Calu3 (cell line): ENCODE measurements at regions of chr3 and their contacts with region 1.

Region 1: DNA sequence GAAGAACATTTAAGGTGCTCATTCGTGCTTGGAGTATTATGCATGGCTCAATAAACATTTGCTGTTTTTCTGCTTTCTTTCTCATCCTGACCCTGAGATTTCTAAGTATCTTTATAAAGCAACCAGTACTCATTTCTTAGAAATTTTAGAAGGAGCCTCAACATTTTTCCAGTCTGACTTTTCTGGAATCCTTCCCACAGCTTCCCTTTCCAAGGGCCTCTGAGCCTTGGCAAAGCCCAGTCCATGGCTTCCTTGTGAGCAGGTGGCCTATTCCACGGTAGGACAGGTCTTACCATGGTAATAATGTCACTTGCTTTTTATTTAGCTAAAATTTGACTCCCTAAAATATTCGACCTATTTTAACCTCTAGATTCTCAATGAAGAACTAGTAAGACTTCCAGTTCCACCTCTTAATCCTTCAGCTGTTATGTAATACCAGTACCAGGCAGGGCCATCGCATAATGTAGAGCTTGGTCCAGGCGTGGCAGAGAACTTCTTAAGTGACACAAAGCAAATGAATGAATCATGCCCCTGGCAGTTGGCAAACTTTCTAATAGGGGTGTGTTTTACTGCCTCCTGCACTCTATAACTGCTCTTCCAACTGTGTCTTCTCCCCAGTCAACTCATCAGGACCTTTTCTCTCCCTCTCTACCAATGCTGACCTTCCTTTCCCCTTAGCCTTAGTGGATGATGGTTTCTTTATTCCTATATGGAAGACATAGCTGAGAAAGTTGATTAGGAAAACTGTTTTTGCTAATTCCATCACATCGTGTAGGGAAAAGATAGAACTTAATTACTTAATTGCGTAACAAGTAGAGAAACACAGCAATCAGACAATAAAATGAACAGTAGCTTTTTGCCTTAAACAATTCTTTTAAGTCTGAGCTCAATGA is 894 bp upstream of the TM4SF4 start:
- DNase-seq: peak; percentile 93
- H3K4me3 Mint-ChIP-seq: peak overlapping the region; percentile 77
- H3K27ac Mint-ChIP-seq: peak overlapping the region; percentile 99
- H3K4me1 Mint-ChIP-seq: peaks cover 82% of the 10 kb centered on the region
- H3K27me3 Mint-ChIP-seq: no peaks in the 10 kb centered on the region
- CTCF ChIP-seq: no peak

Region 2: DNA sequence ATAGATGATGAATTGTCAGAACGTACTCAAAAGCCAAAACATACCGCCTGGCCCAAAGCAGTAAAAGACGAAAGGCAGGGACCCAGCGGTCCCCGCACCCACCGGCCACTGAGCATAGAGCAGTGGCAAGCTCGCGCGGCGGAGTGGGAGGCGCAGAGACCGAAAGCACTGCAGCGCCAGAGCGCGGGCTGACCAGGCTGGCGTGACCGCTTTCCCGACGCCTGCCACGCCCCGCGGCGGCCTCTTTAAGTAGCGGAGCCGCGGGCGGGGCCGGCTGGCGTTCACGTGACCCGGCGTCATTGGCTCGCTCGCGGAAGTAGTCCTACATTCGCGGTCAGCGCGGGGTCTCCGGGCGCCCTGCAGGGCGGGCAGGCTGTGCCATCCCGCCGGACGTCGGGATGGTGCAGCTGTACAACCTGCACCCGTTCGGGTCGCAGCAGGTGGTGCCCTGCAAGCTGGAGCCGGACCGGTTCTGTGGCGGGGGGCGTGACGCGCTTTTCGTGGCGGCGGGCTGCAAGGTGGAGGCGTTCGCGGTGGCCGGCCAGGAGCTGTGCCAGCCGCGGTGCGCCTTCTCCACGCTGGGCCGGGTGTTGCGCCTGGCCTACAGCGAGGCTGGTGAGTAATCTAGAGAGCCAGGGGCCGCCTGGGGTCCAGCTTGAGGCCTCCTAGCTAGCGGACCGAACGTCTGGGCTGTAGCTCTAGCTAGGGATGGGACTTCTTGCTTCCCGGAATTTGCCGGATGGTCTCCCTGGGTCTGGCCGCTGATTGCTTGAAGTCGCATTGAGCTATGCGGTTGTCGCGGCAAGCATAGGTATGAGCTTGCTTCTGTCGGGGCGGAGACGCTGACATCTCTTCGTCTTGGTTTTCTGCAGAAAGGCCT is 344.0 kb before region 1 on chr3 and contains the start of gene HPS3:
- CTCF ChIA-PET with region 1: no interaction called
- intact Hi-C with region 1: loop called (anchors 2 kb)
- DNase-seq: peak; percentile 98
- H3K4me3 Mint-ChIP-seq: peak within 1 kb of the TSS; percentile 94
- H3K27ac Mint-ChIP-seq: peak within 1 kb of the TSS; percentile 91
- H3K4me1 Mint-ChIP-seq: peaks cover 29% of the 10 kb centered on the region
- H3K27me3 Mint-ChIP-seq: no peaks in the 10 kb centered on the region
- CTCF ChIP-seq: peak; percentile 16
- total RNA-seq, gene HPS3: 46.4 and 49.5 TPM in 2 replicates

Region 3: DNA sequence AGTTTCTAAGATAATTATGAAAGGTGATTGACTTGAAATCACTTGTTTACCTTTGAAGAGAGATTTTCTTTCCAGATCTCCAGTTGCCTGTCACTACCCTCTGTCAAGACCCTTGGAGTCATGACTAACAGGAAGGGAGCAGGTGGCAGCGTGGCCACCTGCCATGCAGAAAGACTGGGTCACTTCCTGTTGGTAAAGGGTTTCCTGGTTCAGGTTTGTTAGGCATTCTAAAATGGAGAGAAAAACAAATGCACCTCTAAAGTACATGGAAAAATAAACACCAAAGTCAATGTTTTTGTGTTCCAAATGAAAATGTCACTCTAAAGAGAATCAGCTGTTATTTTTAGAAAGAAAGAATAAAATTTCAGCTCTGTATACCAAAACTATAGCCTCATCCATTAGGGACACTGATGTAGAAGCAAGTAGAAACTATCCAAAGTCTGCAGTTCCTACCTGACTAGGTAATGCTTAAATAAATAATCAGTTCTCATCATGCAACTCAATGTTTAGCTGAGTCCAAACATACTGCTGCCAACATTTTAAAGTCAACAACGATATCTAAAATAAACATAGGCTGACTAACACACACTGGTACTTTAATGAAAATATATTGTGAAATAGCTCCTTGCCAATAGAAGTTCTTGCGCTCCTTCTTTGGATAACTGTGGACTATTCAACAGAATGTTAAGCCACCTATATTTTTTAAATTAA is 72.2 kb before region 1 on chr3:
- CTCF ChIA-PET with region 1: interaction called, 44 read pairs
- intact Hi-C with region 1: loop called (anchors 1 kb)
- DNase-seq: peak; percentile 86
- H3K4me3 Mint-ChIP-seq: peak overlapping the region; percentile 37
- H3K27ac Mint-ChIP-seq: peak overlapping the region; percentile 91
- H3K4me1 Mint-ChIP-seq: peaks cover 84% of the 10 kb centered on the region
- H3K27me3 Mint-ChIP-seq: no peaks in the 10 kb centered on the region
- CTCF ChIP-seq: no peak

Region 4: GRCh38 chr3:149442851-149443544 is 30.6 kb before region 1 on chr3:
- CTCF ChIA-PET with region 1: no interaction called
- intact Hi-C with region 1: loop called (anchors 2 kb)
- DNase-seq: peak; percentile 24
- H3K4me3 Mint-ChIP-seq: no peak overlapping the region
- H3K27ac Mint-ChIP-seq: peak overlapping the region; percentile 77
- H3K4me1 Mint-ChIP-seq: peaks cover 42% of the 10 kb centered on the region
- H3K27me3 Mint-ChIP-seq: no peaks in the 10 kb centered on the region
- CTCF ChIP-seq: no peak